Posterior vena cava (tissue), 2 donors: ENCODE measurements at regions of chr2 and their contacts with region 1.

Region 1: DNA sequence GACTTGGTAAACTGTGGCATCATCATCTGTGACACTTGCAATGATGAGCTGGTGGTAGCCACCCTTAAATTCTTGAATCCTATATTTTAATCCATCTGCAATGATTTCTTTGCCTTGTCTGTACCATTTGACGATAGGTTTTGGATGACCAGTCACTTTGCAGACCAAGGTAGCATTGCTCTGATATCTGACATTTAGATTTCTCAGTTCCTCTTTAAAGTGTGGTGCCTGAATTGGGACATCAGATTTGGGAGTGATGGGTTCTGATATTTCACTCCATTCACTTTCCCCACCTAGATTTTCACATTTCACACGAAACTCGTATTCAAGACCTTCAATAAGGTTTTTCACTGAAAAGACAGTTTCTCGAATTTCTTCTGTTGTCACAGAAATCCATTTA is 55.8 kb downstream of the PLEKHA3 start:
- DNase-seq: no peak

Region 2: GRCh38 chr2:178574777-178575176 is 38.7 kb after region 1 on chr2:
- intact Hi-C with region 1: loop called in 1 of 2 experiments (anchors 5 kb)
- DNase-seq: no peak

Region 3: DNA sequence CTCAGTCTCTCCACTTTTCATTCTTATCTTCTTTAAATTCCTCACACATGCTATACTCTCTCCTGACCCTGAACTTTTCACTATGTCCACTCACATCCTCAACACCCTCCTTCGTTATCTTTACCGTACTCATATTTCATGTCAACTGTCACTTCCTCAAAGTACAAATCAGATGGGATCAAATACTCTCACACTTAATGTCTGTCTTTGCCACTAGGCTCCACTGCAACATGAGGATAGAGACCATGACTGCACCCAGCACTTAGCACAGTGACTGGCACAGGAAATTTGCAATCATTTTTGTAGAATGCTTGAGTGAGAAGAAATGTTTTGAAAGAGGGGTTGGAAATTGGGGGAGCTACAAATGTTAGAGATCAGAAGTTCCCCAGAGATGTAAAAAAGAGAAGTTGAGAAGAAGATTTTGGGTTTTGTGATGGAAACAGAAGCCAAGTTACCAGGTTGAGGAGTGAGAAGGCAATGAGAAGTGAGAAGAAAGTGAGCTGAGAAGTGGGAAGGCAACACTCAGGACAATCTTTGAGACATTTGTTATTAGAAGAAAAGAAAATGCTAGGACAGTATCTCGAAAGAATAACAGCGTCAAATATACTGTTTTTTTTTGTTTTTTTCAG is 426.9 kb after region 1 on chr2:
- intact Hi-C with region 1: no loop called
- DNase-seq: no peak